GM12878 (cell line): ENCODE measurements at regions of chr10 and their contacts with region 1.

Region 1: DNA sequence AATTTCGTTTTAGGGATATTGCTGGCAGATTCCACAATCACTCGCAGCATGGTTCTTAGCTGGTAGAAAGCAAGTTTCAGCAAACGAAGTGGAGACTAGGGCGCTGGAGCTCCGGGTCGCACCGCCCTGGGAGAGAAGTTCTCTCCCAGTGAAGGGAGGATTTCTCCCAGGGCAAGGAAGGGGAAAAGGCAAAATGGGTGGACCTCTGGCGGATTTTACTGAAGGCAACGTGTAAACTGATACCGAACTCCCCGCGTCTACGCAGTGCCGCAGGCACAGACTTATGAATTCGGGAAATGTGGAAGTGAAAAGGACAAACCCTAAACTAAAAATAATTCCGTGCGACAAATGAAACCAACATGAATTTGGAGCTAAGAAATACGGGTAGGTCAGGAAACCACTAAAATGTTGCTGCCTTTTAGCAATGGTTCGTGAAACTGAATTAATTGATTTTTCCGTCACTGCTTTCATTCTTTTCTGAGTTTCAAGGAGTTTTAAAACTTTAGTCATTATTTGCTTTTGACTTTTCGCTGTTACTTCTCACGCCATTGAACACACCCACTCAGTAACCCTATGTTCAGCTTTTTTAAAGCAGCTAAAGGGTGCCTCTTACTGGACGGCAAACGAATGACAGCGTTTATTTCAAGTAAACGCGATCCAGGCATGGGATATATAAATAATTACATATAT is at the start of gene MYOF:
- DNase-seq: peak; percentile 50
- ATAC-seq: peak; percentile 88
- H3K4me3 ChIP-seq: peak within 1 kb of the TSS; percentile 57; the same call in 1 of the 2 replicates
- H3K27ac ChIP-seq: no peak within 1 kb of the TSS
- H3K4me1 ChIP-seq: peaks cover 9% of the 10 kb centered on the region
- H3K27me3 ChIP-seq: peaks cover 0 to 5% of the 10 kb centered on the region in 2 experiments
- CTCF ChIP-seq: peak; percentile 54 to 76 (median 54); a peak in 4 of 6 replicates
- EP300 ChIP-seq: peak in 1 of 2 experiments; percentile 52; a peak in 1 of 4 replicates
- POLR2A ChIP-seq: no peak
- RAD21 ChIP-seq: peak; percentile 95
- polyA plus RNA-seq, gene MYOF: 0.02 to 0.13 TPM

Region 2: DNA sequence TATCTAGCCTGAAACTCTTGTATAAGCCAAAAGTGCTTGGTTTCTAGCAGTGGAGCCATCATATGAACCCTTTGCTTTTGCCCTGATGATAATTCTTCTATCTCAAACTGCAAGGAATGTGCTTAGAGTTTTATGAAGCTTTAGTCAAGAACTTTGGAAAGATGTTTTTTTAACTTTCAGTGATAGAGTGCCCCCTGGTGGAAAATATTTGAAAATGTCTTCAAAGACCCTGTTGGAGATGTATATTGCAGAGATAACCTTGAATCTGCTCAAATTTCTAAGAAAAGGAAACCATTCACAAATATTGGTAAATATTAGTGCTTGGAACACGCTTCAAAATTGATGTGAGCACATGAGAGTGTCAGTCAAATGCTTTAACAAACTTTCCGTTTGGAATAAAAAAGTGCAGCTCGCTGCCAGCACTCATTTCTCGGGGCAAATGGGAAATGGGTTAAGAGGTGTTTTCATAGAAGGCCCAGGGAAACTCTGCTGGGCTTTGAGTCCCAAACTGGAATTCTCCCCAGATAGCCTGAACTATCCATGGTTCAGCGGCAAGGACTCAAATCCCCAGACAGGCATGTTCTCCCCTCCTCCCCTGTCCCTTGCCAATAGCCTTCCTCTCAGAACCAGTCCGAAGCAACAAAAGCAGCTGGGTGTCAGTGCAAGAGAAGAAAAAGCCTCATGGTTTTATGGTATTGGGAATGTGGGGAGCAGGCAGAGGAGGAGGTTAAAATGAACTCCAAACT is 129.5 kb before region 1 on chr10:
- CTCF ChIA-PET with region 1: interaction called, 20 read pairs
- POLR2A ChIA-PET with region 1: no interaction called
- RAD21 ChIA-PET with region 1: interaction called, 4 read pairs
- SMC1A ChIA-PET with region 1: interaction called, 12 read pairs
- in situ Hi-C with region 1: no loop called
- intact Hi-C with region 1: no loop called
- DNase-seq: no peak
- ATAC-seq: peak; percentile 45; the same call in 1 of the 3 replicates
- H3K4me3 ChIP-seq: no peak overlapping the region
- H3K27ac ChIP-seq: no peak overlapping the region
- H3K4me1 ChIP-seq: peaks cover 8% of the 10 kb centered on the region
- H3K27me3 ChIP-seq: peaks cover 1 to 4% of the 10 kb centered on the region in 2 experiments; a peak in 2 of 4 replicates
- CTCF ChIP-seq: peak; percentile 38 to 57 (median 46); a peak in 4 of 6 replicates
- EP300 ChIP-seq: no peak
- POLR2A ChIP-seq: no peak
- RAD21 ChIP-seq: peak; percentile 74

Region 3: GRCh38 chr10:93370961-93371360 is 111.3 kb before region 1 on chr10:
- CTCF ChIA-PET with region 1: interaction called, 283 read pairs
- POLR2A ChIA-PET with region 1: no interaction called
- RAD21 ChIA-PET with region 1: interaction called, 144 read pairs
- SMC1A ChIA-PET with region 1: interaction called, 157 read pairs
- in situ Hi-C with region 1: loop called (anchors 5 kb)
- intact Hi-C with region 1: loop called (anchors 1 kb)
- DNase-seq: no peak
- ATAC-seq: no peak
- H3K4me3 ChIP-seq: no peak overlapping the region
- H3K27ac ChIP-seq: no peak overlapping the region
- H3K4me1 ChIP-seq: no peaks in the 10 kb centered on the region
- H3K27me3 ChIP-seq: 0 out of 4 replicates have a peak, but pooled peaks cover 0 to 2% of the 10 kb centered on the region in 2 experiments
- CTCF ChIP-seq: no peak
- EP300 ChIP-seq: no peak
- POLR2A ChIP-seq: no peak
- RAD21 ChIP-seq: no peak

Region 4: GRCh38 chr10:93386631-93387369 is 95.5 kb before region 1 on chr10:
- CTCF ChIA-PET with region 1: interaction called, 283 read pairs
- POLR2A ChIA-PET with region 1: no interaction called
- RAD21 ChIA-PET with region 1: interaction called, 10 read pairs
- SMC1A ChIA-PET with region 1: interaction called, 157 read pairs
- in situ Hi-C with region 1: no loop called
- intact Hi-C with region 1: no loop called
- DNase-seq: no peak
- ATAC-seq: no peak
- H3K4me3 ChIP-seq: no peak overlapping the region
- H3K27ac ChIP-seq: no peak overlapping the region
- H3K4me1 ChIP-seq: no peaks in the 10 kb centered on the region; the same call in 1 of the 2 replicates
- H3K27me3 ChIP-seq: no peaks in the 10 kb centered on the region
- CTCF ChIP-seq: no peak
- EP300 ChIP-seq: no peak
- POLR2A ChIP-seq: no peak
- RAD21 ChIP-seq: no peak

Region 5: GRCh38 chr10:93458821-93459257 is 23.5 kb before region 1 on chr10:
- CTCF ChIA-PET with region 1: interaction called, 12 read pairs
- POLR2A ChIA-PET with region 1: no interaction called
- RAD21 ChIA-PET with region 1: interaction called, 4 read pairs
- SMC1A ChIA-PET with region 1: interaction called, 3 read pairs
- in situ Hi-C with region 1: no loop called
- intact Hi-C with region 1: no loop called
- DNase-seq: no peak
- ATAC-seq: no peak
- H3K4me3 ChIP-seq: no peak overlapping the region
- H3K27ac ChIP-seq: no peak overlapping the region
- H3K4me1 ChIP-seq: no peaks in the 10 kb centered on the region
- H3K27me3 ChIP-seq: no peaks in the 10 kb centered on the region; a peak in 1 of 4 replicates
- CTCF ChIP-seq: no peak
- EP300 ChIP-seq: no peak
- POLR2A ChIP-seq: no peak
- RAD21 ChIP-seq: no peak

Region 6: DNA sequence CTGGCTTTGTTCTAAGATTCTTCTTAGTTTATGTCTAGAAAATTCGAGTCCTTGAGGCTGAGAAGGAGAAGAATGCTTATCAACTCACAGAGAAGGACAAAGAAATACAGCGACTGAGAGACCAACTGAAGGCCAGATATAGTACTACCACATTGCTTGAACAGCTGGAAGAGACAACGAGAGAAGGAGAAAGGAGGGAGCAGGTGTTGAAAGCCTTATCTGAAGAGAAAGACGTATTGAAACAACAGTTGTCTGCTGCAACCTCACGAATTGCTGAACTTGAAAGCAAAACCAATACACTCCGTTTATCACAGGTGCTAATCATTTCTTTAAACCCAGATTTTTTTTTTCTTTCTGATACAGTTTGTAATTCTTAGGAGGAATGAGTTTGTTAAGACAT is 20.8 kb after region 1 on chr10:
- CTCF ChIA-PET with region 1: interaction called, 28 read pairs
- POLR2A ChIA-PET with region 1: interaction called, 3 read pairs
- RAD21 ChIA-PET with region 1: interaction called, 42 read pairs
- SMC1A ChIA-PET with region 1: interaction called, 17 read pairs
- in situ Hi-C with region 1: no loop called
- intact Hi-C with region 1: no loop called
- DNase-seq: peak; percentile 33
- ATAC-seq: peak; percentile 86
- H3K4me3 ChIP-seq: peak overlapping the region; percentile 19
- H3K27ac ChIP-seq: peak overlapping the region; percentile 75
- H3K4me1 ChIP-seq: peaks cover 3% of the 10 kb centered on the region; the same call in 1 of the 2 replicates
- H3K27me3 ChIP-seq: no peaks in the 10 kb centered on the region
- CTCF ChIP-seq: no peak
- EP300 ChIP-seq: no peak
- POLR2A ChIP-seq: no peak
- RAD21 ChIP-seq: no peak

Region 7: DNA sequence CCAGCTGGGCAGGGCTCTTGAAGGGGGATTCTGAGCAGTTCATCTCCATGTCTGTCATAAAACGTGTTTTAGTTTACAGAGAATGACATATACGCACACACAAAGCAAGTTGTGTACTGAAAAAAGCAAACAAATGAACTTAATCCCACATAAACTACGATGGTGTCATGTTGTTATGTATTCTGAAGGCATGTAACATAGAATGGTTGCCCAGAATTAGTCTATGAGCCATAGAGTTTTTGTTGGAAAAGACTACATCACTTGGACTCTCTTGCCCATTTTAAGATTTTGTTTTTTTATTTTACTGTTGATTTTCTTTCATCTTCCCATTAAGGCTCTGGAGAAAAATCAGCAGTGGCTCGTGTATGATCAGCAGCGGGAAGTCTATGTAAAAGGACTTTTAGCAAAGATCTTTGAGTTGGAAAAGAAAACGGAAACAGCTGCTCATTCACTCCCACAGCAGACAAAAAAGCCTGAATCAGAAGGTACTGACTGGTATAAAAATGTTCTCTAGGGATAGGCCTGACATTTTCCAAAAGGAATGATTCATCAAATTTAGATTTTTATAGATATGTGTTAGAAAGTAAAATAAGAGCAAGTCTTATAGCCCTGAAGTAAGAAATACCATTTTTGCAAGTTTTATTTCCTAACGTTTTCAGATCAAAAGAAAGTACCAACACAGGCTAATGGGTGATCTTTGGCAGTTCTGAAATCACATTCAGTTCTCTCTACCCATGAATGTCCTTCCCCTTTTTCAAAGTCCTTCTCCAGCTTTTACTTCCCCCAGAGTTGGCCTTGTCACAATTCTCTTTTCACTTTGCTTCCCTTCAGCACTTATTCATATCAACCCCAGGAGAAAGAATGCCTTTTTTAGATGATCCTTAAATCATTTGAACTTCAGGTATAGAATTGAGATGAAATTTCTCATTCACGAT is 33.0 kb after region 1 on chr10:
- CTCF ChIA-PET with region 1: interaction called, 46 read pairs
- POLR2A ChIA-PET with region 1: no interaction called
- RAD21 ChIA-PET with region 1: interaction called, 42 read pairs
- SMC1A ChIA-PET with region 1: interaction called, 15 read pairs
- in situ Hi-C with region 1: no loop called
- intact Hi-C with region 1: loop called (anchors 2 kb)
- DNase-seq: no peak
- ATAC-seq: no peak
- H3K4me3 ChIP-seq: no peak overlapping the region
- H3K27ac ChIP-seq: no peak overlapping the region
- H3K4me1 ChIP-seq: no peaks in the 10 kb centered on the region
- H3K27me3 ChIP-seq: no peaks in the 10 kb centered on the region
- CTCF ChIP-seq: no peak
- EP300 ChIP-seq: no peak
- POLR2A ChIP-seq: no peak
- RAD21 ChIP-seq: no peak

Region 8: DNA sequence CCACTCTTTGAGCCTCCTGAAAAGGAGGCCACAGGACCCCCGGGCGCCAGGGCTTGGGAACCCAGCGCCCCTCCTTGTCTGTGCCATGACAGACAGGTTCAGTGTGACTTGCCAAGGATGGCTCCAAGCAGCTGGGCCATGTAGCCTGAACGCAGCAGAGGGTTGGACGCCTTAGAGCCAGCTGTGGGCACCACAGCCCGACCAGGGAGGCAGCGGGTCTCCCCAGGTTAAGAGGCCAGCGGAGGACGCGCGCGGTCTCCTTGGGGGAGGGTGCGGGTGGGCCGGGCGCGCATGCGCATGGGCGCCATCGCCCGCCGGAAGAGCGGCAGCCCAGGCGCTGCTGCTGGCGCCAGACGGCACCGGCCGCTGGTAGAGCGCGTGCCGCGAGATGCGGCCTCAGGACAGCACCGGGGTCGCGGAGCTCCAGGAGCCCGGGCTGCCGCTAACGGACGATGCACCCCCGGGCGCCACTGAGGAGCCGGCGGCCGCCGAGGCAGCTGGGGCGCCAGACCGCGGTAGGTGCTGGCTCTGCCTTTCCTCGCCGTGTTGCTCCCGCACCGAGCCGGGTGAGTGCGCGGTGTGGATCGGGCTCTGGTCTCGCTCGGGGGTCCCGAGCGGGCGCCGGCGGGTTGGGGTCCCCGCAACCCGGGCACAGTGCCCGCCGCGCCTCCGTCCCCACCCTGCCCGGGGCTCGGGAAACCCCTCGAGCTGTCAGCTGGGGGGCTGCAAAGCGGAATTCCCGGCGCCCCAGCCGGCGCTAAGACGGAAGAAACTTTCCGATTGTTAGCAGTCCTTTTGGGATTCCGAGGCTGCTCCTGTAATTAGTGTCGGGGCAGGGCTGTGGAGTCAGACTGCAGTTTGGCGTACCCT is 411.6 kb after region 1 on chr10 and contains the start of gene SLC35G1:
- CTCF ChIA-PET with region 1: no interaction called
- POLR2A ChIA-PET with region 1: no interaction called
- RAD21 ChIA-PET with region 1: no interaction called
- SMC1A ChIA-PET with region 1: no interaction called
- in situ Hi-C with region 1: no loop called
- intact Hi-C with region 1: no loop called
- DNase-seq: peak; percentile 26
- ATAC-seq: peak; percentile 93
- H3K4me3 ChIP-seq: peak within 1 kb of the TSS; percentile 94
- H3K27ac ChIP-seq: peak within 1 kb of the TSS; percentile 64
- H3K4me1 ChIP-seq: peaks cover 8% of the 10 kb centered on the region
- H3K27me3 ChIP-seq: no peaks in the 10 kb centered on the region; a peak in 1 of 4 replicates
- CTCF ChIP-seq: no peak
- EP300 ChIP-seq: no peak
- POLR2A ChIP-seq: peak; percentile 98
- RAD21 ChIP-seq: no peak
- polyA plus RNA-seq, gene SLC35G1: 1.7 to 2.7 TPM